Spleen (tissue), 13 donors: ENCODE measurements at regions of chr9 and their contacts with region 1.

Region 1: DNA sequence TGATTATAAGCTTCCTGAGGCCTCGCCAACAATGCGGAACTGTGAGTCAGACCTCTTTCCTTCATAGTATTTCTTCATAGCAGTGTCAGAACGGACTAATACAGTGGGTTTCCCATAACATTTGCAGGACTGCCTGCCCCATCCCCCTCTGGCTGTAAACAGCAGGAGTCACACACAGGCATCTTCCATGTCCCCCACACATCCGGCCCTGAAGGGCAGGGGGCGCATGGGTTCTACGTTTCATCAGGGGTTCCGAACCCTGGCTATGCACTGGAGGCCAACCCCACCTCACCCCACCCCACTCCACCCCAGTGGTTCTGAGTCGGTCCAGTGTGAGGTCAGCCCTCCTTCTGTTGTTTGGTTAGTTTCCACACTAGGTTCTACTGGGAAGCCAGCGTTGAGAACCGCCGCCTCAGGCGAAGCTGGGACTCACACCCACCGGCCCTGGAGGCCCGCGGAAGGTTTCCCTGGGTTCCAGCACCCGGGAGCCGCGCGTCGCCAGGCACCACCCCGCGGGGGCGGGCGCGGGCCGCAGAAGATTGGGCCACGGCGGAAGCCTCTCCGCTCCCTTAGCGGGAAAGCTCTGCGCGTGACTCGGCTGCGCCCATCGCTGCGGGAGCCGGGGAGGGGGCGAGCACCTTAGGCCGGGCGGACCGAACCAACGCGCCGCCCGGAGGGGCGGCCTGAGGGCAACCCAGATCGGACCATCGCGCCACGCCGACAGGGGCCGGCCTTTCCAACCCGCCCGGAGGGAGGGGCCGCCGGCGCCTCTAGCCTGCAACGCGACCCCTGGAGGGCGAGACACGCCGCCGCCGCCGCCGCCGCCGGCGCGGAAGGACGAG is at the start of gene RUSC2:
- DNase-seq: peak; percentile 88
- H3K4me3 ChIP-seq: peak within 1 kb of the TSS; percentile 51 to 85 (median 62)
- H3K27ac ChIP-seq: peak within 1 kb of the TSS; percentile 63 to 90 (median 88)
- H3K4me1 ChIP-seq: peaks cover 0 to 54% (median 32%) of the 10 kb centered on the region in 6 donors
- H3K27me3 ChIP-seq: peaks cover 0 to 31% (median 9%) of the 10 kb centered on the region in 7 donors
- CTCF ChIP-seq: peak in 9 of 11 experiments; percentile 2 to 63 (median 46)
- POLR2A ChIP-seq: no peak
- total RNA-seq, gene RUSC2: 11.5 to 41.9 (median 15.0) TPM

Region 2: DNA sequence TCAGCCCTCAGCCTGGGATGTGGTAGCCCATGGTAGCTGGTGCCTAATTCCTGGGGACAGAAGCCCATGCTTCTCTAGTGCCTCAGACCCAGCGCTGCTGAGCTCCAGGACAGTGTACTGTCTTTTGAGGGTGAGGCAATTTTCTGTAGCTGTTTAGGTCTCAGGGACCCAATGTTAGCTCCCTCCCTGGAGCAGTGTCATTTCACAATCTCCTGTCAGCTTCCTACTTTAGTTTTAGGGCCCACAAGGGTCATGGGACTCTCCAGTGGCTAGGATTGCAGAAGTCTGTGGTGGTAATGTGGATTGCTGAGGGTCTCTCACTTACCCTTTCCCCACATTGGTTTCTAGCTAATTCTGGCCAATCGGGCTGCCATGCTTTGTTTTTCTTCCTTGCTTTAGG is 711.9 kb before region 1 on chr9:
- intact Hi-C with region 1: no loop called
- DNase-seq: no peak
- H3K4me3 ChIP-seq: no peak overlapping the region
- H3K27ac ChIP-seq: no peak overlapping the region
- H3K4me1 ChIP-seq: no peaks in the 10 kb centered on the region
- H3K27me3 ChIP-seq: peaks cover 0 to 16% (median 0%) of the 10 kb centered on the region in 7 donors
- CTCF ChIP-seq: no peak
- POLR2A ChIP-seq: no peak

Region 3: DNA sequence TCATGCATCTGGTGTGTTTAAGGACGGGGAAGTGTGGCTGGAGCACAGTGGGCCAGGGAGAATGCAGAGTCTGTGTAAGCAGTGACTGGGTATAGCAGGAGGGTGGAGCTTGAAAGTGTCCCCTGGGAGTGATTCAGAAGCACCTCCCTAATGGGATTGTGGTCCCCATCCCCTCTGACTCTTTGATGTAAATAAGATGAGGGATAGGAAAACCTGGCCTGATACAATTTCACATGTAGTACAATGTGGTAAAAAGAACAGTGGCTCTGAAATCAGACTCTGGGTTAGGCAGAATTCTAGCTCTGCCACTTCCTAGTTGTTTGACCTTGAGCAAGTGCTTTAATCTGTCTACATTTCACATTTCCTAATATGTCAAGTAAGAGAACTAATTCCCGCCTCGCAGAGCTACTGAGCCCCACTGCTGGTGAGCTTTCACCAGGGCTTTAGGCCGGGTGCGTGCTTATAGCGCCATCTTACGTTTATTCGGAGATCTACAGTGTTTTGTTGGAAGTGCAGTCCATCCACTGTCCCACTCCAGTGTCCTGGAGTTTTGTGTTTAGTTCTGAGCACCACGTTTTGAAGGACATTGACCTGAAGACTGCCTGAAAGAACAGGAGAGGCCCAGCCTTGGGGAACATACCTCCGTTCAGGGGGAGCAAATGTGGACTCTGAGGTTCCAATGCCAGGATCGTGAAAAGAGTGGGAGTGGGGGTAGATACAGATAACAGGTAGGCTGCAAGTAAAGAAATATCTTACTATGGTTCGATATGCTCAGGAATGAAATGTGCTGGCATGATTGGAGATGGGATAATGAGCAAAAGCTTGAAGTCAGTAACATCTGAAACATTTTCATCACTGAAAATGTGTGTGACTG is 64.4 kb after region 1 on chr9:
- intact Hi-C with region 1: loop called (anchors 10 kb)
- DNase-seq: no peak
- H3K4me3 ChIP-seq: no peak overlapping the region
- H3K27ac ChIP-seq: peak overlapping the region in 7 of 8 donors; percentile 35 to 71 (median 56)
- H3K4me1 ChIP-seq: peaks cover 0 to 35% (median 21%) of the 10 kb centered on the region in 6 donors
- H3K27me3 ChIP-seq: no peaks in the 10 kb centered on the region
- CTCF ChIP-seq: peak; percentile 38 to 86 (median 72)
- POLR2A ChIP-seq: no peak